GM18951 (cell line): ENCODE measurements at regions of chr6 and their contacts with region 1.

Region 1: GRCh38 chr6:149834513-149835481 is 29.4 kb downstream of the LRP11 start:
- POLR2A ChIP-seq: no peak

Region 2: GRCh38 chr6:150004783-150005717 is 170.3 kb after region 1 on chr6:
- in situ Hi-C with region 1: loop called (anchors 25 kb)
- POLR2A ChIP-seq: peak; percentile 34